ENCODE measurements at regions of chr15 and their contacts with region 1.

Region 1: GRCh38 chr15:59814409-59814808 is 125.3 kb upstream of the BNIP2 start:
- DNase-seq: no peak
- H3K4me3 ChIP-seq: no peak overlapping the region
- H3K27ac ChIP-seq: no peak overlapping the region
- H3K4me1 ChIP-seq: no peaks in the 10 kb centered on the region
- H3K27me3 ChIP-seq: peaks cover 0 to 27% of the 10 kb centered on the region in 2 donors
- CTCF ChIP-seq: no peak
- POLR2A ChIP-seq: no peak

Region 2: DNA sequence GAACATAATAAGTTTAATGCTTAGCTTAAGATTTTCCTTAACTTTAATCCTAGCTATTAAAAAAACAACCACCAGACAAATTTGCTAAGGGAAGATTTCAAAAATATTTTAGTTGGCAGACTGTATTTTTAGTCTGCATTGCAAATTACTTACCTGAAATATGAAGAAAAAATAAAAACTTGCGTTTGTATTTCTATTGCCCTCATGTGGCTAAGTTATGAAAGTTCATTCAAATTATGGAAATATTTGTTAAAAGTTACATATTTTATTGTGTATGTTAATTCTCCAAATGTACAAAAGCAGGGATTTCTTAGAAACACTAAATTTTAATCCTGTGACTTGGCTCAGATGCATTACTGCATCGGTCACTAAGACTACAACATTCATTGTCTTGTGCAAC is 172.1 kb before region 1 on chr15:
- intact Hi-C with region 1: no loop called
- DNase-seq: no peak
- H3K4me3 ChIP-seq: no peak overlapping the region
- H3K27ac ChIP-seq: no peak overlapping the region
- H3K4me1 ChIP-seq: no peaks in the 10 kb centered on the region
- H3K27me3 ChIP-seq: no peaks in the 10 kb centered on the region
- CTCF ChIP-seq: no peak
- POLR2A ChIP-seq: no peak

Region 3: GRCh38 chr15:59751552-59752413 is 62.6 kb before region 1 on chr15:
- intact Hi-C with region 1: loop called (anchors 2 kb)
- DNase-seq: no peak
- H3K4me3 ChIP-seq: no peak overlapping the region
- H3K27ac ChIP-seq: no peak overlapping the region
- H3K4me1 ChIP-seq: no peaks in the 10 kb centered on the region
- H3K27me3 ChIP-seq: peaks cover 0 to 14% of the 10 kb centered on the region in 2 donors
- CTCF ChIP-seq: peak in 1 of 3 donors; percentile 40
- POLR2A ChIP-seq: no peak

Region 4: DNA sequence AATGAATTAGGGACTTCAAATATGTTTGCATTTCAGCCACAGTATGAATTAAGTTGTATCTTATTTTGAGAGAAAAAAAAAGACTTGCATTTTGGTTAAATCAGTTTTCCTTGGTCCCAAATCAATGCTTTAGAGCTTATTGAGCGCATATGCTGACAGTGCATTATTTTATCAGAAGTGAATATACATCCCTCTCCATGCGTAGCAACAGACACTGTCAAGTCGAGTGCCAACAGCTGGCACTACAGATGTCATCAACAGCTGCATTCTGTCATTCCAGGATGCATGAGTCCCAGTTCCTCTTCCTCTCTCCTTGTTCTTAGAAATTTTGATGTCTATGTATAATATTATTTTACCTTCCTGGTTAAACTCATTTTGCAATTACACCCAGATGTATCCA is 33.6 kb after region 1 on chr15:
- intact Hi-C with region 1: no loop called
- DNase-seq: no peak
- H3K4me3 ChIP-seq: no peak overlapping the region
- H3K27ac ChIP-seq: no peak overlapping the region
- H3K4me1 ChIP-seq: no peaks in the 10 kb centered on the region
- H3K27me3 ChIP-seq: peaks cover 0 to 10% of the 10 kb centered on the region in 2 donors
- CTCF ChIP-seq: no peak
- POLR2A ChIP-seq: no peak